HEK293 (cell line): ENCODE measurements at regions of chr15 and their contacts with region 1.

Region 1: GRCh38 chr15:51137880-51138430 is 43.2 kb upstream of the TNFAIP8L3 start:
- H3K4me3 ChIP-seq: no peak overlapping the region
- H3K27ac ChIP-seq: no peak overlapping the region
- H3K4me1 ChIP-seq: no peaks in the 10 kb centered on the region
- CTCF ChIP-seq: no peak

Region 2: GRCh38 chr15:50380089-50380488 is 757.9 kb before region 1 on chr15:
- CTCF ChIA-PET with region 1: no interaction called
- POLR2A ChIA-PET with region 1: interaction called, 10 read pairs
- H3K4me3 ChIP-seq: no peak overlapping the region
- H3K27ac ChIP-seq: no peak overlapping the region
- H3K4me1 ChIP-seq: no peaks in the 10 kb centered on the region
- CTCF ChIP-seq: no peak

Region 3: DNA sequence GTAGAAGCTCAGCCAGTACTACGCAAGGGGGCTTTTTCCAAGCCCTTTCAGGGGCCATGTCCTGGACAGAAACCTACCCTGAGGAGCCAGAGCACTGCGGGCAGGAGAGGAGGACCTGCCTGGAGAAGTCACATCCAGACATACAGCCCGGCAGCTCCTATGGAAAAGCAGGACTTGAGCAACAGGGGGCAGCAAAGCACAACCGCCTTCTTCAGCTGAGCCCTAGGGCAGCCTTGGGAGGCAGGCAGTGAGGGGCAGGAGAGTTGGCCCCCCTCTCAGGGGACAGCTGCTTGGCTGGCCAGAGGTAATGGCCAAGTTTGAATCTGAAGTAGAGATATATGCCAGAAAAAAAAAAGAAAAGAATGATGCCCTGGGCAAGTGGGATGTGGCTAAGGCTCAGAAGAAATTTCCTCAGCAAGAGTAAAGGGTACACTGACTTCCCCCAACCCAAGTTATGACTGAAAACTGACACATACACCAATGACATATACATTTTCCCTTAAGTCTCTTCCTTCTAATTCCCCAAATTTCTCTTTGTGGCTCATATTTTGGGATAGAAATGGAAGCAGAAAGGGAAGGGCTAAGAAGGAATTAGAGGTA is 143.5 kb after region 1 on chr15:
- CTCF ChIA-PET with region 1: no interaction called
- POLR2A ChIA-PET with region 1: no interaction called
- H3K4me3 ChIP-seq: no peak overlapping the region
- H3K27ac ChIP-seq: no peak overlapping the region
- H3K4me1 ChIP-seq: no peaks in the 10 kb centered on the region
- CTCF ChIP-seq: peak; percentile 51